Left ventricle myocardium inferior (tissue), 1 donor: ENCODE measurements at regions of chr2 and their contacts with region 1.

Region 1: DNA sequence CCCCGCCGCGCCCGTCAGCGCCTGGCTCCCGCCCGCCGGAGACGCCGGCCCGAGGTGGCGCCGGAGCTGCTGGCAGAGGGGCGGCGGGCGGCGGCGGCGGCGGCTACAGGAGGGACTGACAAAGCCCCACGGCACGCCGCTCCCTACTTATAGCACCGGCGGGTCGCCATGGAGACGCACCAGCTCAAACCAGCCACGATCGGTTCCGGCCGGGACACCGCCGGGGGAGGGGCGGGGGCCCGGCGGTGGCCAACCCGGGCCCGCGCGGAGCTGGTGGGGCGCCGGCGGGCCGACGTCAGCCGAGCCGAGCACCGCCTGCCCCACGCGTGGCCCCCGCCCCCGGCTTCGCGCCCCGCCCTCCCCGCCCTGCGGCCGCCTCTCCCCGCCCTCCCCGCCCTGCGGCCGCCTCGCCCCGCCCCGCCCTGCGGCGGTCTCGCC is at the start of gene ODC1:
- DNase-seq: peak; percentile 93
- H3K4me3 ChIP-seq: peak within 1 kb of the TSS; percentile 88
- H3K27ac ChIP-seq: peak within 1 kb of the TSS; percentile 90
- H3K4me1 ChIP-seq: peaks cover 44% of the 10 kb centered on the region
- H3K27me3 ChIP-seq: no peaks in the 10 kb centered on the region
- CTCF ChIP-seq: no peak
- total RNA-seq, gene ODC1: 41.7 TPM

Region 2: DNA sequence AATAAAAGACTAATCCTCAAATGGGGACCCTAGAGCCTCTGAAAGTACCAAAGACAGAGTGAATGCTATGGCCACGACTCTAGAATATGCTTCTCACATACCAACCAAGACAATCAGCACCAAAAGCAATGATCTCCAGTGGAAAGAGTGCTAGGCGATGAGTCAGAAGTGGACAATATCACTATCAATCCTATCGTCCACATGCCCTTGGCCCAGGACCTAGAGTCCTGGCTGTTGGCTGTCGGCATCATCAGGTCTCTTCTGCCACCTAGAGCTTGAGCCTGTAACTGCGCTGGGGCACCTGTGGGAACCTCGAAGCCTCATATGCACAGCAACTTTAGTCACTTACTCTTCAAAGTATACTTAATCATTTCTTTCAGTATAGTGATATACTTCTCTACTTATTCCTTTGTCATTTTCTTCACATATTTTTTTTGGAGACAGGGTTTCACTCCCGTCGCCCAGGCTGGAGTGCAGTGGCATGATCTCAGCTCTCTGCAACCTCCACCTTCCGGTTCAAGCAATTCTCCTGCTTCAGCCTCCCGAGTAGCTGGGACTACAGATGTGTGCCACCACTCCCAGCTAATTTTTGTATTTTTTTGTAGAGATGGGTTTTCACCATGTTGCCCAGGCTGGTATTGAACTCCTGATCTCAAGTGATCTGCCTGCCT is 211.8 kb after region 1 on chr2:
- intact Hi-C with region 1: loop called (anchors 10 kb)
- DNase-seq: peak; percentile 47
- H3K4me3 ChIP-seq: no peak overlapping the region
- H3K27ac ChIP-seq: no peak overlapping the region
- H3K4me1 ChIP-seq: no peaks in the 10 kb centered on the region
- H3K27me3 ChIP-seq: no peaks in the 10 kb centered on the region
- CTCF ChIP-seq: peak; percentile 87